ENCODE measurements at regions of chrX and their contacts with region 1.

Region 1: GRCh38 chrX:13750204-13750603 is 15.7 kb downstream of the OFD1 start:
- DNase-seq: peak in 4 of 14 experiments; percentile 15 to 67 (median 60)
- ATAC-seq: peak; percentile 65
- H3K4me3 ChIP-seq: no peak overlapping the region
- H3K4me3 Mint-ChIP-seq: no peak overlapping the region
- H3K27ac ChIP-seq: no peak overlapping the region
- H3K27ac Mint-ChIP-seq: peak overlapping the region; percentile 6
- H3K4me1 ChIP-seq: peaks cover 3% of the 10 kb centered on the region
- H3K4me1 Mint-ChIP-seq: peaks cover 28% of the 10 kb centered on the region
- H3K27me3 ChIP-seq: no peaks in the 10 kb centered on the region
- H3K27me3 Mint-ChIP-seq: no peaks in the 10 kb centered on the region
- CTCF ChIP-seq: peak; percentile 62

Region 2: DNA sequence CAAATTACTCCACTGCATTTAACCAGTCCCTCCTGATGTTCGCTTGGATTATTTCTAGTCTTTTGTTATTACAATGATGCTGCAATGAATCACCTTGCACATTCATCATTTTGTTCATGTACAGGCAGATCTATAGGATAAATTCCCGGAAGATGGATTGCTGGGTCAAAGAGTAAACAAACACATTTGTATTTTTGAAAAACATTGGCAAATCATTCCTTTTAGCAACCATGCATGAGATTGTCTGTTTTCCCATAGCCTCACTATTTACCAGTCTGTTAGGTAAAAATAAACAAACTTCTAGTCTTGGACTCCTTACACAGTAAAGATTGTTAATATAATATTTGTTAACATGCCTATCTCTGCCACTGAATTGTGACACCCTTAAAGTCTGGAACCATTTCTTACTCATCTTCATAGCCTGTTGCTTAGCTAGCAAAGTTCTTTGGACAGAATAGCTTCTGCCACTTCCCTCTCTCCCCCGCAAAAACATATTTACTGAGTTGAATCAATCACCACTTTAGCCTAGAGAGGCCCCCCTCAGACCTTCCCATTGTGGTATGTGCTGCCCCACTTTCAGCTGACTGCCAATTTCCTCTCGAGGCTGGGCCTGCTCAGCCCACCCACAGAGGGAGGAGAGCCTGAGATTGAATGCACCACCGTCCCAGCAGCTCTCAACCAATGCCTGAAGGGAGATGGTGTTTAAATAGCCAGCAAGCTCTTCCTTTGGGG is 322.0 kb before region 1 on chrX:
- CTCF ChIA-PET with region 1: no interaction called
- POLR2A ChIA-PET with region 1: no interaction called
- intact Hi-C with region 1: no loop called
- DNase-seq: peak in 1 of 14 experiments; percentile 4
- ATAC-seq: no peak
- H3K4me3 ChIP-seq: no peak overlapping the region
- H3K4me3 Mint-ChIP-seq: no peak overlapping the region
- H3K27ac ChIP-seq: no peak overlapping the region
- H3K27ac Mint-ChIP-seq: no peak overlapping the region
- H3K4me1 ChIP-seq: no peaks in the 10 kb centered on the region
- H3K4me1 Mint-ChIP-seq: peaks cover 9% of the 10 kb centered on the region
- H3K27me3 ChIP-seq: no peaks in the 10 kb centered on the region
- H3K27me3 Mint-ChIP-seq: no peaks in the 10 kb centered on the region
- CTCF ChIP-seq: no peak

Region 3: GRCh38 chrX:13658602-13659001 is 91.6 kb before region 1 on chrX:
- CTCF ChIA-PET with region 1: interaction called, 5 read pairs
- POLR2A ChIA-PET with region 1: no interaction called
- intact Hi-C with region 1: loop called (anchors 2 kb)
- DNase-seq: peak in 4 of 14 experiments; percentile 14 to 76 (median 74)
- ATAC-seq: peak; percentile 59
- H3K4me3 ChIP-seq: no peak overlapping the region
- H3K4me3 Mint-ChIP-seq: peak overlapping the region; percentile 7
- H3K27ac ChIP-seq: peak overlapping the region in 1 of 2 donors; percentile 22
- H3K27ac Mint-ChIP-seq: peak overlapping the region; percentile 82
- H3K4me1 ChIP-seq: peaks cover 7% of the 10 kb centered on the region
- H3K4me1 Mint-ChIP-seq: peaks cover 24% of the 10 kb centered on the region
- H3K27me3 ChIP-seq: no peaks in the 10 kb centered on the region
- H3K27me3 Mint-ChIP-seq: no peaks in the 10 kb centered on the region
- CTCF ChIP-seq: no peak

Region 4: GRCh38 chrX:15321447-15321846 is 1571.2 kb after region 1 on chrX:
- CTCF ChIA-PET with region 1: no interaction called
- POLR2A ChIA-PET with region 1: no interaction called
- intact Hi-C with region 1: loop called in 1 of 2 experiments (anchors 10 kb)
- DNase-seq: peak in 3 of 14 experiments; percentile 4 to 30 (median 25)
- ATAC-seq: no peak
- H3K4me3 ChIP-seq: no peak overlapping the region
- H3K4me3 Mint-ChIP-seq: no peak overlapping the region
- H3K27ac ChIP-seq: no peak overlapping the region
- H3K27ac Mint-ChIP-seq: no peak overlapping the region
- H3K4me1 ChIP-seq: no peaks in the 10 kb centered on the region
- H3K4me1 Mint-ChIP-seq: no peaks in the 10 kb centered on the region
- H3K27me3 ChIP-seq: no peaks in the 10 kb centered on the region
- H3K27me3 Mint-ChIP-seq: no peaks in the 10 kb centered on the region
- CTCF ChIP-seq: no peak

Measured in CD4-positive, alpha-beta T cell (primary cell).